ENCODE measurements at regions of chr22 and their contacts with region 1.

Region 1: DNA sequence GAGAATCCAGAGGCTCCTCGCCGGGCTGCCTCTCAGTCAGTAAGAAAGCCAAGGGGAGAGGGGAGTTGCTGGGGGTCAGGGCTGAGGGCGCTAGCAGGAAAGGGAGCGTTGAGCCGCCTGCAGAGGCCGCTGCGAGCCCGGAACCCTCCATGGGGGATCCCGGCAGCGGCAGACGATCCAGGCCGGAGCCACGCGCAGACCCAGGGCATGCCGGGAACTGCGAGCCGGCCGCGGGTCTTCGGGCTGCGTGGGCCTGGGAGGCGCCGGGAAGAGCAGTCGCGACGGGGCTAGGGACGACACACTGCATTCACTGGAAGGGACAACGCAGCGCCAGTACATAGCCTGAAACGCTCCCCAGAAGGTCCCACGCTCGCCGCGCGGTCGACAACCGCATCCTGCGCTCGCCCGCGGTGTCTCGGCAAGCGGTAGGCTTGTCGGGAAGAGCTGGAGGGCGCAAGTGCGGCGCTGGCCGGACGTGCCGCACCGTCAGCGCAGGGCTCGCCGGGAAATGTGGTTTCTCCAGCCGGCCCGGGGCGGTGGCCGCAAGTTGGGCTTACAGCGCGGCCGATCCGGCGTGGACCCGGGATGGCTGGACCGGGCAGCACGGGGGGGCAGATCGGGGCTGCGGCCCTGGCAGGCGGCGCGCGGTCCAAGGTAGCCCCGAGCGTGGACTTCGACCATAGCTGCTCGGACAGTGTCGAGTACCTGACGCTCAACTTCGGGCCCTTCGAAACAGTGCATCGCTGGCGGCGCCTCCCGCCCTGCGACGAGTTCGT is at the start of gene LZTR1:
- DNase-seq: peak; percentile 86 to 93 (median 92)
- ATAC-seq: peak; percentile 94 to 95
- H3K4me3 ChIP-seq: peak within 1 kb of the TSS; percentile 76
- H3K27ac ChIP-seq: peak within 1 kb of the TSS; percentile 94
- H3K4me1 ChIP-seq: peaks cover 5% of the 10 kb centered on the region
- H3K27me3 ChIP-seq: no peaks in the 10 kb centered on the region
- total RNA-seq, gene LZTR1: 28.3 to 33.2 (median 31.1) TPM

Region 2: GRCh38 chr22:20867179-20868024 is 114.6 kb before region 1 on chr22:
- intact Hi-C with region 1: loop called in 1 of 4 experiments (anchors 10 kb)
- DNase-seq: peak; percentile 50 to 74 (median 62)
- ATAC-seq: peak; percentile 88 to 95
- H3K4me3 ChIP-seq: no peak overlapping the region
- H3K27ac ChIP-seq: peak overlapping the region; percentile 71
- H3K4me1 ChIP-seq: peaks cover 8% of the 10 kb centered on the region
- H3K27me3 ChIP-seq: no peaks in the 10 kb centered on the region

Region 3: GRCh38 chr22:20916983-20917810 is 64.8 kb before region 1 on chr22 and contains the start of gene CRKL:
- intact Hi-C with region 1: loop called in 1 of 4 experiments (anchors 5 kb)
- DNase-seq: peak; percentile 98 to 99 (median 99)
- ATAC-seq: peak; percentile 100
- H3K4me3 ChIP-seq: peak within 1 kb of the TSS; percentile 88
- H3K27ac ChIP-seq: peak within 1 kb of the TSS; percentile 93
- H3K4me1 ChIP-seq: peaks cover 6% of the 10 kb centered on the region
- H3K27me3 ChIP-seq: no peaks in the 10 kb centered on the region
- total RNA-seq, gene CRKL: 50.5 to 53.7 (median 52.0) TPM

Region 4: GRCh38 chr22:21098099-21098671 is 116.2 kb after region 1 on chr22:
- intact Hi-C with region 1: no loop called
- DNase-seq: no peak
- ATAC-seq: no peak
- H3K4me3 ChIP-seq: no peak overlapping the region
- H3K27ac ChIP-seq: no peak overlapping the region
- H3K4me1 ChIP-seq: no peaks in the 10 kb centered on the region
- H3K27me3 ChIP-seq: no peaks in the 10 kb centered on the region

Measured in right cardiac atrium (tissue), 5 donors.